ENCODE measurements at regions of chr19 and their contacts with region 1.

Region 1: DNA sequence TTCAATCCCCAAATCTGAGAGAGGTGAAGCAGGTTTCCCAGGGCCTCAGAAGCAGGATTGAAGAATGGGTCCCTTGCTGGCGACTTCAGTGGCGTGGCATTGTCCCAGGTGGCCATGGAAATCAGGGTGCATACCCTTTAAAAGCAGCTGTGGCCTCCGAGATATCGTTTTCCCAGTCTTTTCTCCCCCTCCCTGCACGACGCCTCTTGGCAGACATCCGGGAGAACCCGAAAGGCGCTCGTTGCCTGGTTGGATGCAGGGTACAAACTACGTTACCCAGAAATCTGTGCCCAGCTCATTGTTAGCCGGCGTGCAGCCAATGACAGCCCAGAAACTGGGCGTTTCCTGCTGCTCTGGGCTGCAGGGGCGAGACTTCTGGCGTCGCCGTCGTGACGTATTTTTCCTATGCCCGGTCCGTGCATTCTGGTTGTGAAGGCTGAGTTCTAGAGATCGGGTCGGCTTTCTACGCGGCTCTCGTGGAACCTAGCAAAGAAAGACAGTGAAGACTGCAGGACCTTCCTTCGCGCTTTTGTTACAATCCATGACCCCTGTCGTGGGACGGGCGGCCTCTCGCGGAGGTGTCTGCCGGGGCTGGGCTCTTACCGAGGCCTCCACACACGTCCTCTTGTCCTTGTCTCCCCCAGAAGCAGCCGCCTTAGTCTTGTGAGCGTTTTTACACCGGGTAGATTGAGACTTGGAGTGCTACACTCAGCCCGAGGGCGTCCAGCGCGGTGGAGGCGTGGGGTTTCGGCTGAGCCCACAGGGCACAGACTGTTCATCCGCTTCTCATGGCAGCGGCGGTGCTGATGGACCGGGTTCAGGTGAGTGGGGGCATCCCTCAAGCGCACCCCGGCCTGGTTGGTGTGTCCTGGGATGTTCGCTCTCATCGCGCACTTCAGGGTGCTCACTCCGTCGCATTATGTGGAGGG is at the start of gene ZNF304:
- DNase-seq: peak; percentile 90
- ATAC-seq: peak; percentile 100
- H3K4me3 ChIP-seq: peak within 1 kb of the TSS; percentile 66 to 97 (median 87)
- H3K4me3 Mint-ChIP-seq: peak within 1 kb of the TSS; percentile 97
- H3K27ac ChIP-seq: peak within 1 kb of the TSS; percentile 50 to 86
- H3K27ac Mint-ChIP-seq: peak within 1 kb of the TSS; percentile 90
- H3K4me1 ChIP-seq: peaks cover 15 to 19% of the 10 kb centered on the region in 2 donors
- H3K4me1 Mint-ChIP-seq: peaks cover 31% of the 10 kb centered on the region
- H3K27me3 ChIP-seq: no peaks in the 10 kb centered on the region
- H3K27me3 Mint-ChIP-seq: peaks cover 4% of the 10 kb centered on the region
- CTCF ChIP-seq: no peak
- total RNA-seq, gene ZNF304: 16.2 and 16.9 TPM in 2 replicates

Region 2: GRCh38 chr19:57279418-57280066 is 71.6 kb before region 1 on chr19:
- CTCF ChIA-PET with region 1: no interaction called
- POLR2A ChIA-PET with region 1: no interaction called
- intact Hi-C with region 1: loop called (anchors 1 kb)
- DNase-seq: peak; percentile 92
- ATAC-seq: peak; percentile 73
- H3K4me3 ChIP-seq: peak overlapping the region; percentile 73 to 94 (median 91)
- H3K4me3 Mint-ChIP-seq: no peak overlapping the region
- H3K27ac ChIP-seq: peak overlapping the region; percentile 98 to 100
- H3K27ac Mint-ChIP-seq: no peak overlapping the region
- H3K4me1 ChIP-seq: peaks cover 29 to 33% of the 10 kb centered on the region in 2 donors
- H3K4me1 Mint-ChIP-seq: peaks cover 31% of the 10 kb centered on the region
- H3K27me3 ChIP-seq: no peaks in the 10 kb centered on the region
- H3K27me3 Mint-ChIP-seq: no peaks in the 10 kb centered on the region
- CTCF ChIP-seq: peak; percentile 26

Region 3: GRCh38 chr19:57320180-57321084 is 30.7 kb before region 1 on chr19 and contains the start of gene ZNF543:
- CTCF ChIA-PET with region 1: no interaction called
- POLR2A ChIA-PET with region 1: no interaction called
- intact Hi-C with region 1: loop called (anchors 1 kb)
- DNase-seq: peak; percentile 96
- ATAC-seq: peak; percentile 98
- H3K4me3 ChIP-seq: peak within 1 kb of the TSS; percentile 50 to 95 (median 89)
- H3K4me3 Mint-ChIP-seq: peak within 1 kb of the TSS; percentile 93
- H3K27ac ChIP-seq: peak within 1 kb of the TSS; percentile 85 to 89
- H3K27ac Mint-ChIP-seq: peak within 1 kb of the TSS; percentile 96
- H3K4me1 ChIP-seq: peaks cover 19 to 23% of the 10 kb centered on the region in 2 donors
- H3K4me1 Mint-ChIP-seq: peaks cover 32% of the 10 kb centered on the region
- H3K27me3 ChIP-seq: peaks cover 0 to 21% (median 13%) of the 10 kb centered on the region in 4 experiments
- H3K27me3 Mint-ChIP-seq: peaks cover 24% of the 10 kb centered on the region
- CTCF ChIP-seq: no peak
- total RNA-seq, gene ZNF543: 16.7 and 19.6 TPM in 2 replicates

Region 4: GRCh38 chr19:57410877-57411671 is 59.9 kb after region 1 on chr19 and contains the start of gene ZNF17:
- CTCF ChIA-PET with region 1: no interaction called
- POLR2A ChIA-PET with region 1: no interaction called
- intact Hi-C with region 1: loop called (anchors 1 kb)
- DNase-seq: peak; percentile 93
- ATAC-seq: peak; percentile 100
- H3K4me3 ChIP-seq: peak within 1 kb of the TSS; percentile 66 to 98 (median 89)
- H3K4me3 Mint-ChIP-seq: peak within 1 kb of the TSS; percentile 97
- H3K27ac ChIP-seq: peak within 1 kb of the TSS; percentile 22 to 77
- H3K27ac Mint-ChIP-seq: peak within 1 kb of the TSS; percentile 89
- H3K4me1 ChIP-seq: peaks cover 12 to 17% of the 10 kb centered on the region in 2 donors
- H3K4me1 Mint-ChIP-seq: peaks cover 26% of the 10 kb centered on the region
- H3K27me3 ChIP-seq: no peaks in the 10 kb centered on the region
- H3K27me3 Mint-ChIP-seq: no peaks in the 10 kb centered on the region
- CTCF ChIP-seq: no peak
- total RNA-seq, gene ZNF17: 25.8 and 30.7 TPM in 2 replicates